Gastrocnemius medialis (tissue), 4 donors: ENCODE measurements at regions of chr4 and their contacts with region 1.

Region 1: DNA sequence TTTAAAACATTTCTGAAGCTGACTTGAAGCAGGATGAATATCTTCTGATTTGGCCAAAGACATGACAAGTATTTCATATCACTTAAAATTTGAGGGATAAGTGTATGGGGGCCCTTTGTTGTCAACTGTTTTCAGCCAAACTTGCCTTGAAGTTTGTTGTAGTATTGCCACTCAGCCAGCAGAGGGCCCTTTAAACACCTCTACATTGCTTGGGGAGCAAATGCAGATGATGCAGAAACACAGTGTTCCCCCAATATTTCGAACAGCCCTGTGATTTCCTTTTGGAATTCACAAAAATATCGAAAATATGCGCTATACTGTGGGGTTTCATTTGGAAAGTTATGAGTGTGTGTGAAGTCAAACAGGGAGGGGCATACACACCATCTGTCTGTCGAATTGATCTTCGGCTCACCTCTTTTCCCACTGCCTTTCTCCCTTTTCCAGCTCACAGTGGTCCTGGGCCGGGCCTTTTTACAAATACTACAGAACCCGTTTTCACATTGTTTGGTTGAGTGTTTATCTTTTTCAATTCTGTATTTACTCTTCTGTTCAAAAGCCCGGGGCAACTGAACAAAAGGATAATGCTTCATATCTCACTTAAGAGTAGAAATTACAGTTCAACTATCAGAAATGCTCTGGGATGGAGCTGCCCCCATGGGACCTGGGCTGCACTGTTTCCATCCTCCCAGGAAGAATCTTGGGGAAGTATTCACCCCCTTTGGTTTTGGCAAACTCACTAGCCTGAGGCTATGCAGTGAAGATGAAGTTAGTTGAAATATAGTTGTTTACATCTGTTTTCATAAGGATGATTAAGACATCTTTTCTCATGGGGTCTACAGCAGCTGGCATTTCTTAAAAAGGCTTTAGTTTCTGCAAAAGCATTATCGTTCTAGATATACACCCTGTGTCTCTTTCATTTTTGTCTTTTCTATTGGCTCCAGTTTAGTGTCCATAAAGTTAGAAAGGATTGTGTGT is 137.6 kb downstream of the EGF start:
- DNase-seq: no peak
- ATAC-seq: peak in 1 of 2 donors; percentile 39
- H3K4me3 ChIP-seq: no peak overlapping the region
- H3K27ac ChIP-seq: no peak overlapping the region
- H3K4me1 ChIP-seq: no peaks in the 10 kb centered on the region
- H3K27me3 ChIP-seq: no peaks in the 10 kb centered on the region
- CTCF ChIP-seq: peak; percentile 53 to 74 (median 63)
- POLR2A ChIP-seq: no peak

Region 2: DNA sequence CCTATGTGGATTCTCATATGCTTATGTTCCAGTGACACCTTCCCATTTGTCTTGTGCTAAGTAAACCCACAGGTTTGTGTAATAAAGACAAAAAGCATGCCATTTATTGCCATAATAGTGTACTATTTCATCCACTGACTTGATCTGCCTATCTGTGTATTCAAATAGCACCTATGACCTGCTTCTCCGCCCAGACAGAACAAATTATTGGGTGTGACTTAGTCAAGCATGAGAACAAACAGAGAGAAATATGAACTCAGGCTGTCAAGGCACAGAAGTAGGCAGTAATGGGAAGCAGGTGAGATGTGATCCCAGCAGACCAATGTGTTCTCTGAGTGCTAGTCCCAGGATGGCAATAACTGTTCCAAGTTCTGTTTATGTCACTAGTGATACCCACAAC is 122.7 kb after region 1 on chr4:
- in situ Hi-C with region 1: no loop called
- intact Hi-C with region 1: loop called (anchors 5 kb)
- DNase-seq: no peak
- ATAC-seq: no peak
- H3K4me3 ChIP-seq: no peak overlapping the region
- H3K27ac ChIP-seq: no peak overlapping the region
- H3K4me1 ChIP-seq: no peaks in the 10 kb centered on the region
- H3K27me3 ChIP-seq: no peaks in the 10 kb centered on the region
- CTCF ChIP-seq: no peak
- POLR2A ChIP-seq: no peak

Region 3: GRCh38 chr4:110201502-110201901 is 151.3 kb after region 1 on chr4:
- in situ Hi-C with region 1: loop called in 3 of 4 experiments (anchors 5 to 10 kb)
- intact Hi-C with region 1: no loop called
- DNase-seq: no peak
- ATAC-seq: no peak
- H3K4me3 ChIP-seq: no peak overlapping the region
- H3K27ac ChIP-seq: no peak overlapping the region
- H3K4me1 ChIP-seq: no peaks in the 10 kb centered on the region
- H3K27me3 ChIP-seq: no peaks in the 10 kb centered on the region
- CTCF ChIP-seq: no peak
- POLR2A ChIP-seq: no peak

Region 4: GRCh38 chr4:110211007-110211769 is 160.9 kb after region 1 on chr4:
- in situ Hi-C with region 1: loop called (anchors 5 to 10 kb)
- intact Hi-C with region 1: loop called (anchors 1 kb)
- DNase-seq: no peak
- ATAC-seq: peak in 1 of 2 donors; percentile 30
- H3K4me3 ChIP-seq: no peak overlapping the region
- H3K27ac ChIP-seq: no peak overlapping the region
- H3K4me1 ChIP-seq: no peaks in the 10 kb centered on the region
- H3K27me3 ChIP-seq: no peaks in the 10 kb centered on the region
- CTCF ChIP-seq: peak in 4 of 5 experiments; percentile 21 to 66 (median 51)
- POLR2A ChIP-seq: no peak

Region 5: GRCh38 chr4:110411574-110412011 is 361.4 kb after region 1 on chr4:
- in situ Hi-C with region 1: no loop called
- intact Hi-C with region 1: no loop called
- DNase-seq: no peak
- ATAC-seq: no peak
- H3K4me3 ChIP-seq: no peak overlapping the region
- H3K27ac ChIP-seq: no peak overlapping the region
- H3K4me1 ChIP-seq: no peaks in the 10 kb centered on the region
- H3K27me3 ChIP-seq: no peaks in the 10 kb centered on the region
- CTCF ChIP-seq: no peak
- POLR2A ChIP-seq: no peak

Region 6: GRCh38 chr4:110639207-110640090 is 589.2 kb after region 1 on chr4:
- in situ Hi-C with region 1: no loop called
- intact Hi-C with region 1: no loop called
- DNase-seq: no peak
- ATAC-seq: no peak
- H3K4me3 ChIP-seq: no peak overlapping the region
- H3K27ac ChIP-seq: no peak overlapping the region
- H3K4me1 ChIP-seq: no peaks in the 10 kb centered on the region
- H3K27me3 ChIP-seq: peaks cover 0 to 14% (median 0%) of the 10 kb centered on the region in 3 donors
- CTCF ChIP-seq: no peak
- POLR2A ChIP-seq: no peak